Dorsolateral prefrontal cortex (tissue), 120 donors: ENCODE measurements at regions of chr3 and their contacts with region 1.

Region 1: DNA sequence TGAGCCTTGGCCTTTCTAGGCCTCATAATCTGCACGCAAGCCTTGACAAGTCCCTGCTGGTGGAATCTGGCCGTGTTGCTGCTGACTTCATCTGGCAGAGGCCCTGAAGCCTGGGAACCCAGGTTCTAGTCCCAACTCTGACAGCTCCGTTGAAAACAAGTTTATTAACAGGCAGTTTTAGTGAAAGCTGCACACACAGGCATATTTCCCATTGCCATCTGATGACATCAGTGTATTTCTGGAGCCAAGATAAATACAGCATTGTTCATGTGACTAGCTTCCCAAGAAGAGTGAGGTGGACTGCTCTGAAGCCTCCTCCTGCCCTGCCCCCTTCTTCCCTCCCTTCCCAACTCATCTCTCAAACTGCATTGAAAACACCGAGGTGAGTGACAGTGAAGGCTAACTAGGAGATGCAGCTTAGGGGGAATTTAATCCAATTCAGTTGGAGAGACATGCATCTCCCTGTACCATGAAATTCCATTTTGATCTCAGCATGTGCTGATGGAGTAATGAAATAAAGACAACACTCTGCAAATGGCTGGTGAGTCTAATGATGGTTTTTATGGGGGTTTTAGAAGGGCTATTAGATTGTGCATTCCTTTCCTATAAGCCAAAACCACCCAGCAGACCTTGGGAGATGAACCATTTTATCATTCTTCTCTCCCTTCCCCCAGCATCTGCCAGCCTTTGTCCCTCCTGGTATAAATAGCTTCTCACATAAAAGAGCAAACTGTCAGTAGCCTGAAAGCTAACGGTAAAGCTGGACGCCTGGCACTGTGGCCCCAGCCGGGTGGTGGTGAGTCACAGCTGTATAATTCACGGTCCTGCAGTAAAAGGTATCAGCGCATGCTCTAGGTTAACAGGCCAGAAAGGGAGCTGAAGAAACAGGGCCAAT is 38.0 kb downstream of the PRICKLE2 start:
- DNase-seq: peak in 8 of 10 donors; percentile 32 to 84 (median 54)
- H3K4me3 ChIP-seq: peak overlapping the region in 20 of 59 donors; percentile 2 to 41 (median 20)
- H3K27ac ChIP-seq: peak overlapping the region in 56 of 59 donors; percentile 3 to 88 (median 74)
- H3K27me3 ChIP-seq: no peaks in the 10 kb centered on the region
- CTCF ChIP-seq: no peak

Region 2: DNA sequence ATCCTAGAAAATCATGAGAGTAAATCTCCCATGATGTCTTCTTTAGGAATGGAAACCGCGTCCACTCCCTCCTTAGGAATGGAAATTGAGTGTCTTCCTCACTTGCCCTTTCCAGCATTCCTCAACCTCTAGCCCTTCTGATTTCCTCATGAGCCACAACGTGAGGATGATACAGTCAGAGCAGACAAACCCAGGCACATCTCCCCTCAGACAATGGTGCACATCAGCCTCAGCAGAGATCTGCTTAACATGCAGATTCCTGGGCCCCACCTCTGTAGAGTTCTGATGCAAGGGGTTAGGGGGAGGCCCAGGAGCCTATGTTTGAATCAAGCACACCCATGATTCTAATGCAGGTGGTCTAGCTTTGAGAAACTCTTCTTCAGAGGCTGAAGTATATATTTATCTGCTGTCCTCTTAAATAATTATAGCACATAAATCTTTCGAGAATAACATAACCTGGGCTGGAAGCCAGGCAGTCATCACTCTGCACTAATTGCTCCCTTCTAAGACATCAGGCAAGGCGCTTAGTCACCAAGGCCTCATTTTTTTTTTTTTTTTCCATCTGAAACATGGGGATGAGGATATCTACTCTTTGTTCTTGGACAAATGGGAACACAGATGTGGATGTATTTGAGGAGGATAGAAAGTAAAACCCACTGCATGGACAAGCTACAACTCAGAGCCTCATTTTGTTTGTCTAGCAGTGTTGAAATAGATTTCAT is 43.7 kb before region 1 on chr3:
- intact Hi-C with region 1: no loop called
- DNase-seq: peak in 1 of 10 donors; percentile 43
- H3K4me3 ChIP-seq: no peak overlapping the region
- H3K27ac ChIP-seq: peak overlapping the region in 52 of 59 donors; percentile 3 to 83 (median 54)
- H3K27me3 ChIP-seq: no peaks in the 10 kb centered on the region
- CTCF ChIP-seq: no peak

Region 3: GRCh38 chr3:64484289-64484992 is 297.1 kb after region 1 on chr3:
- intact Hi-C with region 1: loop called in 1 of 2 experiments (anchors 10 kb)
- DNase-seq: peak; percentile 69 to 91 (median 83)
- H3K4me3 ChIP-seq: no peak overlapping the region
- H3K27ac ChIP-seq: no peak overlapping the region
- H3K27me3 ChIP-seq: peaks cover 0 to 13% (median 0%) of the 10 kb centered on the region in 45 donors
- CTCF ChIP-seq: peak; percentile 87 to 100 (median 96)